Activated CD4-positive, alpha-beta memory T cell treated with anti-CD3 and anti-CD28 coated beads for 36 hours (primary cell): ENCODE measurements at regions of chr17 and their contacts with region 1.

Region 1: GRCh38 chr17:12041316-12041715 is 20.6 kb downstream of the MAP2K4 start:
- DNase-seq: no peak
- H3K4me3 Mint-ChIP-seq: no peak overlapping the region
- H3K27ac Mint-ChIP-seq: no peak overlapping the region
- H3K4me1 Mint-ChIP-seq: peaks cover 41% of the 10 kb centered on the region
- H3K27me3 Mint-ChIP-seq: no peaks in the 10 kb centered on the region

Region 2: GRCh38 chr17:12020642-12021622 is 20.4 kb before region 1 on chr17 and contains the start of gene MAP2K4:
- CTCF ChIA-PET with region 1: interaction called, 6 read pairs
- POLR2A ChIA-PET with region 1: interaction called, 4 read pairs
- intact Hi-C with region 1: loop called (anchors 2 kb)
- DNase-seq: peak; percentile 95
- H3K4me3 Mint-ChIP-seq: peak within 1 kb of the TSS; percentile 75
- H3K27ac Mint-ChIP-seq: peak within 1 kb of the TSS; percentile 18
- H3K4me1 Mint-ChIP-seq: peaks cover 44% of the 10 kb centered on the region
- H3K27me3 Mint-ChIP-seq: no peaks in the 10 kb centered on the region
- total RNA-seq, gene MAP2K4: 22.0 to 27.2 TPM

Region 3: GRCh38 chr17:12053552-12053951 is 12.2 kb after region 1 on chr17:
- CTCF ChIA-PET with region 1: no interaction called
- POLR2A ChIA-PET with region 1: no interaction called
- intact Hi-C with region 1: no loop called
- DNase-seq: no peak
- H3K4me3 Mint-ChIP-seq: no peak overlapping the region
- H3K27ac Mint-ChIP-seq: no peak overlapping the region
- H3K4me1 Mint-ChIP-seq: peaks cover 70% of the 10 kb centered on the region
- H3K27me3 Mint-ChIP-seq: no peaks in the 10 kb centered on the region